Mammary epithelial cell (primary cell): ENCODE measurements at regions of chr22 and their contacts with region 1.

Region 1: GRCh38 chr22:46462726-46463371 is 74.6 kb downstream of the CELSR1 start:
- DNase-seq: peak; percentile 94
- H3K4me3 ChIP-seq: no peak overlapping the region
- H3K27ac ChIP-seq: peak overlapping the region; percentile 26
- H3K4me1 ChIP-seq: peaks cover 28% of the 10 kb centered on the region
- H3K27me3 ChIP-seq: no peaks in the 10 kb centered on the region
- CTCF ChIP-seq: no peak

Region 2: GRCh38 chr22:46425016-46425415 is 37.8 kb before region 1 on chr22:
- CTCF ChIA-PET with region 1: no interaction called
- dilution Hi-C with region 1: loop called (anchors 5 kb)
- in situ Hi-C with region 1: no loop called
- intact Hi-C with region 1: no loop called
- DNase-seq: peak; percentile 83
- H3K4me3 ChIP-seq: no peak overlapping the region
- H3K27ac ChIP-seq: no peak overlapping the region
- H3K4me1 ChIP-seq: peaks cover 3% of the 10 kb centered on the region
- H3K27me3 ChIP-seq: no peaks in the 10 kb centered on the region
- CTCF ChIP-seq: no peak

Region 3: GRCh38 chr22:46501701-46502100 is 38.9 kb after region 1 on chr22:
- CTCF ChIA-PET with region 1: no interaction called
- dilution Hi-C with region 1: no loop called
- in situ Hi-C with region 1: no loop called
- intact Hi-C with region 1: no loop called
- DNase-seq: peak; percentile 83
- H3K4me3 ChIP-seq: no peak overlapping the region
- H3K27ac ChIP-seq: peak overlapping the region; percentile 33
- H3K4me1 ChIP-seq: peaks cover 40% of the 10 kb centered on the region
- H3K27me3 ChIP-seq: no peaks in the 10 kb centered on the region
- CTCF ChIP-seq: no peak

Region 4: GRCh38 chr22:46528121-46528610 is 65.3 kb after region 1 on chr22:
- CTCF ChIA-PET with region 1: no interaction called
- dilution Hi-C with region 1: loop called (anchors 5 kb)
- in situ Hi-C with region 1: loop called in 1 of 2 experiments (anchors 10 kb)
- intact Hi-C with region 1: no loop called
- DNase-seq: peak; percentile 96
- H3K4me3 ChIP-seq: no peak overlapping the region
- H3K27ac ChIP-seq: peak overlapping the region; percentile 47
- H3K4me1 ChIP-seq: peaks cover 55% of the 10 kb centered on the region
- H3K27me3 ChIP-seq: no peaks in the 10 kb centered on the region
- CTCF ChIP-seq: no peak

Region 5: GRCh38 chr22:46557736-46558480 is 95.1 kb after region 1 on chr22:
- CTCF ChIA-PET with region 1: no interaction called
- dilution Hi-C with region 1: no loop called
- in situ Hi-C with region 1: no loop called
- intact Hi-C with region 1: no loop called
- DNase-seq: peak; percentile 71
- H3K4me3 ChIP-seq: no peak overlapping the region
- H3K27ac ChIP-seq: no peak overlapping the region
- H3K4me1 ChIP-seq: peaks cover 16% of the 10 kb centered on the region
- H3K27me3 ChIP-seq: no peaks in the 10 kb centered on the region
- CTCF ChIP-seq: no peak